Panc1 (cell line): ENCODE measurements at regions of chr10 and their contacts with region 1.

Region 1: DNA sequence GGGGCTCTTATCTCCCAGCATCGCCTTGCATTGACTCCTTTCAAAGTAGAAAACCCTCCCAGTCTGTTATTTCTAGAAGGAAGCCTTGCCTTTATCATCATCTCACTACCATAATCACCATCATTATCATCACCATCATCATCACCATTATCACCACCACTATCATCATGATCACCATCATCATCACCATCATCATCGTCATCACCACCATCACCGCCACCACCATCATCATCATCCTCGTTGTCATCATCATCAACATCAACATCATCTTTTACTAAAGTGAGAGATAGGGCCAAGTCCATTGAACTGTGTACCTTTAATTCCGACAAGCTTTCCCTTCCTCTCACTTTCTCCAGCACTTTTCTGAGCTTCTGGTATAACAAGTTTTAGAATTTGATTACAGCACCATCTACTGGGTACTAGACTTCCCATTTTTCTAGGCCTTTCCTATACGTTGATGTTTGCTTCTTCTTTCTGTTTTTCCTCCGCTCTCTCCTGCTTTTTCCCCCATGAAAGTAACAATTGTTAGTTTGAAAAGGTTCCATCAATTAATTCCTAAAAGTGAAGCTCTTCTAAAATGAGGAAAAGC is 226.4 kb downstream of the BUB3 start:
- DNase-seq: peak; percentile 39
- ATAC-seq: peak; percentile 80; the same call in 1 of the 2 replicates
- H3K4me3 ChIP-seq: no peak overlapping the region
- H3K27ac ChIP-seq: no peak overlapping the region
- H3K4me1 ChIP-seq: no peaks in the 10 kb centered on the region
- H3K27me3 ChIP-seq: no peaks in the 10 kb centered on the region
- CTCF ChIP-seq: peak; percentile 74

Region 2: GRCh38 chr10:123132576-123133477 is 247.8 kb before region 1 on chr10:
- CTCF ChIA-PET with region 1: interaction called, 8 read pairs
- POLR2A ChIA-PET with region 1: no interaction called
- in situ Hi-C with region 1: no loop called
- intact Hi-C with region 1: loop called (anchors 1 kb)
- DNase-seq: peak; percentile 71
- ATAC-seq: peak; percentile 82
- H3K4me3 ChIP-seq: peak overlapping the region; percentile 34 to 41
- H3K27ac ChIP-seq: 0 out of 2 replicates have a peak overlapping the region, but pooled peaks have one; percentile 17
- H3K4me1 ChIP-seq: peaks cover 11% of the 10 kb centered on the region; the same call in 1 of the 2 replicates
- H3K27me3 ChIP-seq: no peaks in the 10 kb centered on the region; the same call in 1 of the 2 replicates
- CTCF ChIP-seq: peak; percentile 98

Region 3: DNA sequence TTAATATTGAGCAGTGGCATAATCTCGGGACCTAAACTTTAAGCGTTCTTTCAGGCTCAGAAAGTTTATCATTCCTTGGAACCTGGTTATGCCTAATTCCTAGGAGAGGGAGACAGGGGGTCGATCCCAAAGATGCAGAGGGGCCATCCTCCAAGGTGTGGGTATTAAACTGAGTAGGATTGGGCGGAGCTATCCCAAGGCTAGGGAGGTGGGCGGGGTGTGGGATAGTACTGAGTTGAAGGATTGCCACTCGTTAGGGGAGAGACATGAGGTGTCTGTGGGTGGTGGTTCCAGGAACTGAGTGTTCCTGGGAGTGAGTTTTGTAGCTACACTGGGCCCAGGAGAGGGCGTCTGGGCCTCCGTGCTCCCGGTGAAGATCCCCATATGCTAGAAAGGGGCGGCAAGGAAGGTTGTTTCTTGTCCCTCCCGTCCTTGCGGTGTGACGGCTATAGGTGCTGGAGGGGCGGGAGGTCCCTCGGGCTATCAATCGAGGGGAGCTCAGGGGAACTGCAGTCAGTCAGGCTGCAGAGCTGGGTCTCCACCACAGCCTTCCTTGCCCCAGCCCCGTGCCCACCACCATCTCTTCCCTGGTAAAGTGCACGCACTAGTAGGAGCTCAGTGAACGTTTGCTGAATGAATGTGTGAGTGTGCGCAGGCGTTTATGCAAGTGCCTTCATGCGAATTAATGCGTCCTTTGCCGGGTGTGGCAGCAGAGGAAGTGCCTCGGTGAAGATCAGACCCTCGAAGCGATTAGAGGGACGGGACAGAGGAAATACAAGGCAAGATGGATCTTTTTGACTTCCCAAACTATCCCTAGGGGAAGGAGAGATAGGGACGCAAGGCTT is 235.7 kb before region 1 on chr10:
- CTCF ChIA-PET with region 1: interaction called, 5 read pairs
- POLR2A ChIA-PET with region 1: no interaction called
- in situ Hi-C with region 1: no loop called
- intact Hi-C with region 1: loop called (anchors 1 kb)
- DNase-seq: no peak
- ATAC-seq: peak; percentile 52
- H3K4me3 ChIP-seq: no peak overlapping the region
- H3K27ac ChIP-seq: peak overlapping the region; percentile 4; the same call in 1 of the 2 replicates
- H3K4me1 ChIP-seq: peaks cover 23% of the 10 kb centered on the region
- H3K27me3 ChIP-seq: no peaks in the 10 kb centered on the region
- CTCF ChIP-seq: peak; percentile 68